Activated CD4-positive, alpha-beta T cell treated with anti-CD3 and anti-CD28 coated beads, Interleukin-2, amount 10 ng/mL, durations not matched to agents 24 days and 14 days (primary cell): ENCODE measurements at regions of chr5 and their contacts with region 1.

Region 1: GRCh38 chr5:5492087-5492933 is 69.8 kb downstream of the ICE1 start:
- DNase-seq: peak; percentile 85
- H3K4me3 Mint-ChIP-seq: peak overlapping the region; percentile 74
- H3K27ac Mint-ChIP-seq: peak overlapping the region; percentile 8
- H3K4me1 Mint-ChIP-seq: peaks cover 17% of the 10 kb centered on the region
- H3K27me3 Mint-ChIP-seq: peaks cover 10% of the 10 kb centered on the region

Region 2: GRCh38 chr5:5014586-5015235 is 477.6 kb before region 1 on chr5:
- intact Hi-C with region 1: no loop called
- DNase-seq: no peak
- H3K4me3 Mint-ChIP-seq: no peak overlapping the region
- H3K27ac Mint-ChIP-seq: no peak overlapping the region
- H3K4me1 Mint-ChIP-seq: no peaks in the 10 kb centered on the region
- H3K27me3 Mint-ChIP-seq: no peaks in the 10 kb centered on the region

Region 3: GRCh38 chr5:5421961-5422818 is 70.1 kb before region 1 on chr5 and contains the start of gene ICE1:
- intact Hi-C with region 1: loop called (anchors 1 kb)
- DNase-seq: peak; percentile 98
- H3K4me3 Mint-ChIP-seq: peak within 1 kb of the TSS; percentile 97
- H3K27ac Mint-ChIP-seq: peak within 1 kb of the TSS; percentile 98
- H3K4me1 Mint-ChIP-seq: peaks cover 22% of the 10 kb centered on the region
- H3K27me3 Mint-ChIP-seq: no peaks in the 10 kb centered on the region
- total RNA-seq, gene ICE1: 35.6 and 36.9 TPM in 2 replicates

Region 4: GRCh38 chr5:5886812-5887486 is 394.6 kb after region 1 on chr5:
- intact Hi-C with region 1: loop called (anchors 2 kb)
- DNase-seq: peak; percentile 89
- H3K4me3 Mint-ChIP-seq: no peak overlapping the region
- H3K27ac Mint-ChIP-seq: no peak overlapping the region
- H3K4me1 Mint-ChIP-seq: no peaks in the 10 kb centered on the region
- H3K27me3 Mint-ChIP-seq: peaks cover 2% of the 10 kb centered on the region

Region 5: GRCh38 chr5:6576861-6577501 is 1084.7 kb after region 1 on chr5:
- intact Hi-C with region 1: loop called (anchors 2 kb)
- DNase-seq: peak; percentile 75
- H3K4me3 Mint-ChIP-seq: no peak overlapping the region
- H3K27ac Mint-ChIP-seq: no peak overlapping the region
- H3K4me1 Mint-ChIP-seq: no peaks in the 10 kb centered on the region
- H3K27me3 Mint-ChIP-seq: peaks cover 22% of the 10 kb centered on the region

Region 6: DNA sequence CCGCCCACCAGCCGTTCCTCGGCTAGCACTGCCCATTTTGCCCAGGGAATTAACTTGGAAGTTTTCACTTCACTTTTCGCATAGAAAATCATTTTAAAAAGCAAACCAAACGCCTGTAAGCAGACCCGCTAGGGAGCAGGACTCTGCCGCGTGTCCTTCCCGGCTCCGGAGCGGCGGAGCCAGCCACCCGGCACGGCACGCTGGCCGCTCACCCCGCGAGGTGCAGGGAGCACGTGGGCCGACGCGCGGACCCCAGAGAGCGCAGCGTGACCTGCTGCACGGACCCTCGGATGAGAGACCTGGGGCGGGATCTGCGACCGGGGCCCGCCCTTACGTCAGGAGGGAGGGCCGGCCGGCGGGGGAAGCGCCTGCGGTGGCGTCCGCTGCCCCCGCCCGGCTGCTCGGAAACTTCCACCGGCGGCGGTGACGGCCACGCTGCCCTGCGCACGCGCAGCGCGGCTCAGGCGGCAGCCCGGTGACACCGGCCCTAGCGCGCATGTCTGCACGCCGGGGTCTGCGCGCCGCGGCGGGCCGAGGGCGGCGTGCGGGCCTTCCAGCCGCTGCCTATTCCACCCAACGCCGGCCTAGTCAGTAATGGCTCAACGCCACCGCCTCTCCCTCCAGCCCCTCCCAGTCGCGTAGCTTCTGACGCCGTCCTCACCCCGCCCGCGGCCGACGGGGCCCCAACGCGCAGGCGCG is 1220.4 kb after region 1 on chr5:
- intact Hi-C with region 1: loop called (anchors 10 kb)
- DNase-seq: peak; percentile 99
- H3K4me3 Mint-ChIP-seq: peak overlapping the region; percentile 89
- H3K27ac Mint-ChIP-seq: peak overlapping the region; percentile 97
- H3K4me1 Mint-ChIP-seq: peaks cover 35% of the 10 kb centered on the region
- H3K27me3 Mint-ChIP-seq: no peaks in the 10 kb centered on the region